PC-3 (cell line): ENCODE measurements at regions of chr3 and their contacts with region 1.

Region 1: DNA sequence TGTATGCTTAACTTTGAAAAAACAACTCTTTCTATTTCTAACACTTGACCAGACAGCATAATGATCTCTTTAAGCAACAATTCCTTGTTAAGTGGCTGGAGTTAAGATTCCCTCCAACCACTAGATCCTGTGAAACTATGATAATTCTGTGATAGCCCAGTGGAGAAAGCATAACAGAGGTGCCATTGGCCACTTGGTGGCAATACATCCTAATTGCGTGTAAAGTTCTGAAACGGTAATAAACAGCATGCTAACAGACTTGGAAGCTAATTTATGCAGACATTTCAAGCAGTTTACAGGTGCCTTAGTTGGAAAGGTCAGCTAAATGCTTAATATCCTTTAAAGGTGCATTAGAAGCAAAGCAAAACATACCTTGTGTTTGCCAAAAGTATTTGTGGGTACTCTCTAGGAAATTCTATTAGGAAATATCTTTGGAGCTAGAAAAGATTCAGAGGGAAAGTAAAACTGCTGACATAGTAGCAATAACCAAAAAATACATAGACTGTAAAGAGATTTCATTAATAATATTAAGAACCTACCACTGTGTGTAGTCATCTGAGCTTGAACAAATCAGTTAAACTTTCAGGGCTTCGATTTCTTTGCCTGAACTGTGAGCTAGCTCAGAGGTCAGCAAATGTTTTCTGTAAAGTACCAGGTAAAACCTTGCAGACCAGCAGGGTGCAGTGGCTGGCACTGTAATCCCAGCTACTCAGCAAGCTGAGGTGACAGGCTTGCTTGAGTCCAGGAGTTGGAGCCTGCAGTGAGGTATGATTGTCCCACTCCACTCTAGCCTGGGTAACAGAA is 19.0 kb upstream of the CSTA start:
- DNase-seq: peak; percentile 73
- ATAC-seq: peak; percentile 98
- H3K4me3 ChIP-seq: peak overlapping the region; percentile 21; the same call in 1 of the 2 replicates
- H3K27ac ChIP-seq: no peak overlapping the region
- H3K4me1 ChIP-seq: 0 out of 2 replicates have a peak, but pooled peaks cover 3% of the 10 kb centered on the region
- H3K27me3 ChIP-seq: no peaks in the 10 kb centered on the region
- CTCF ChIP-seq: peak; percentile 52

Region 2: GRCh38 chr3:122350814-122351418 is 44.9 kb after region 1 on chr3:
- CTCF ChIA-PET with region 1: interaction called, 68 read pairs
- POLR2A ChIA-PET with region 1: interaction called, 6 read pairs
- intact Hi-C with region 1: loop called (anchors 1 kb)
- DNase-seq: peak; percentile 27
- ATAC-seq: peak; percentile 86
- H3K4me3 ChIP-seq: no peak overlapping the region
- H3K27ac ChIP-seq: no peak overlapping the region
- H3K4me1 ChIP-seq: peaks cover 13% of the 10 kb centered on the region
- H3K27me3 ChIP-seq: no peaks in the 10 kb centered on the region
- CTCF ChIP-seq: no peak

Region 3: DNA sequence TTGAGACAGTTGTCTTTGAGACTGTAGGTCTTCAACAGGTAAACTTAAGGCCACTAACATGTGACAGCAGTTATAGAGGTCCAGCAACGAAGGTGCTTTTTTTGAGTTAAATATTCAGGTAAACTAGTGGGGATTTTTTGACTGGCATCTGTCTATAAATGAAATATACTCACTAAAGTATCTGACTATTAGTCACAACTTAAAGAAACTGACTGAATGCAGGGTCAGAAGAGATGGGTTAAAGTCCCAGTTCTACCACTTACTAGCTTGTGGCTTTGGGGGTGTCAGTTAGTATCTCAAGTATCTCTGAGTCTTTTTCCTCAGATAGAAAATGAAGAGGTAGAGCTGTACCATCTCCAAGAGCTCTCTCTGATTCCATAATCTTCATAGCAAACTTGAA is 59.1 kb after region 1 on chr3:
- CTCF ChIA-PET with region 1: interaction called, 10 read pairs
- POLR2A ChIA-PET with region 1: no interaction called
- intact Hi-C with region 1: no loop called
- DNase-seq: no peak
- ATAC-seq: peak; percentile 2; the same call in 1 of the 2 replicates
- H3K4me3 ChIP-seq: peak overlapping the region; percentile 13
- H3K27ac ChIP-seq: peak overlapping the region; percentile 91
- H3K4me1 ChIP-seq: peaks cover 30% of the 10 kb centered on the region
- H3K27me3 ChIP-seq: no peaks in the 10 kb centered on the region
- CTCF ChIP-seq: no peak

Region 4: GRCh38 chr3:122383771-122384697 is 78.0 kb after region 1 on chr3 and contains the start of gene FAM162A:
- CTCF ChIA-PET with region 1: interaction called, 26 read pairs
- POLR2A ChIA-PET with region 1: no interaction called
- intact Hi-C with region 1: loop called (anchors 1 kb)
- DNase-seq: peak; percentile 98
- ATAC-seq: peak; percentile 90
- H3K4me3 ChIP-seq: peak within 1 kb of the TSS; percentile 90
- H3K27ac ChIP-seq: peak within 1 kb of the TSS; percentile 40
- H3K4me1 ChIP-seq: peaks cover 44% of the 10 kb centered on the region
- H3K27me3 ChIP-seq: no peaks in the 10 kb centered on the region
- CTCF ChIP-seq: peak; percentile 83
- total RNA-seq, gene FAM162A: 86.4 and 126 TPM in 2 replicates

Region 5: DNA sequence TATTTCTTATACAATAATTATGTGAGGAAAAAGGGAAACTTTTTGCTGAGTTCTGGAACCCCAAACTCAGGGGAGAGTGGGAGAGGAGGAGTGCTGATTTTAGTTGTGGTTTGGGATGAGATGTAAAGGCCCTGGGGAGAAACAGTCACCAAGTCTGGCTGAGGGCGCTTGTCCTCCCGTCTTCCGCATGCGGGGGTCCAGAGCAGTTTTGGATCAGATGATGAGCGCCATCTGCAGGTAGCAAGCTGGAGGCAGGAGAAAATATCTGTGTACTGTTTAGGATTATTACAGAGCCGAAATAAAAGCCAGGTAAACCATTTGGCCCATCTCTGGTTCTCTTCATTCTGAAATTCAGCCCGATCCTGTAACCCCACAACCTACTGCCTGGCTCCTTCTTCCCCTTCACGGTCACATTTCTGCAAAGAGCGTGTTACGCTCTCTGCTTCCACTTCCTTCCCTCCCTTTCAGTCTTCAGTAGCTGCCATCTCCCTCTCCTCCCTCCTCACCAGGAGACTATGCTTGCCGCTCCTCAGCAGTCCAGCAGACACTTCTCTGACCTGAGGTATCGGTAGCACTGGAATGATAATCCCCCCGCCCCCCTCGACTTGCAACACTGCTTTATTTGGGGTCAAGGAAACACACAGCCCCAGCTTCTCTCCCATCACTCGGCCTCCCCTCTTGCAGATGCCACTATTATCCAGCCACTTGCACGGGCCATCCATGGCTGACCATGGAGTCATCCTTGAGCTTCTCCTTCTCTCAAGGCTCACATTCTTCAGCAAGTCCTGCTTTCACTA is 373.3 kb after region 1 on chr3:
- CTCF ChIA-PET with region 1: no interaction called
- POLR2A ChIA-PET with region 1: no interaction called
- intact Hi-C with region 1: loop called (anchors 5 kb)
- DNase-seq: peak; percentile 92
- ATAC-seq: peak; percentile 61
- H3K4me3 ChIP-seq: peak overlapping the region; percentile 94
- H3K27ac ChIP-seq: peak overlapping the region; percentile 36; the same call in 1 of the 2 replicates
- H3K4me1 ChIP-seq: peaks cover 23% of the 10 kb centered on the region
- H3K27me3 ChIP-seq: no peaks in the 10 kb centered on the region
- CTCF ChIP-seq: peak; percentile 96